ENCODE measurements at regions of chr5 and their contacts with region 1.

Region 1: DNA sequence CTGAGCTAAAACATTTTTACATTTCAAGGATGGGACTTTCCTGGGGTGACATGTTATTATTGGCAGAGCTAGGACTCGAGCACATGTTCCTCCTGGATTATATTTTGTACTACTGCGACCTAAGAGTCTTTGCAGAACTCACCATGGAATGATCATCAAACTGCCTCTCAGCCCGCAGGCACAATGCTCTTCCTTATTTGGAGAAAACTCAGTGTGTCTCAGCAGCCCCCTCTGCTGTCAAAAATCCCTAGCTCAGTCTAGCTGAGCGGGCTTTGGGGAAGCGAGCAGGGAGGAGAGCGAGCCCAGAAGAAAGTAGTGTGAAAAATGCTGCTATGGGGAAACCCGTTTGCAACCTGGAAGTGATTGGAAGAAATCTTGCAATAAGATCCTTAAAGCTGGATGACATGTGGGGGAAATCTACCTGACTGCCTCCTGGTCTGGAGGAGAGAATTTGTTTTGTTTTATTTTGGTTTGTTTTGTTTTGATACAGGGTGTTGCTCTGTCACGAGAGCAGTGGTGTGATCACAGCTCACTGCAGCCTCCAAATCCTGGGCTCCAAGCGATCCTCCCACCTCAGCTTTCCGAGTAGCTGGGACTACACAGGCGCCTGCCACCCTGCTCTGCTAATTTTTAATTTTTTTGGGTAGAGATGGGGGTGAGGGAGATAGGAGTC is 89.9 kb upstream of the CLINT1 start:
- DNase-seq: peak; percentile 89
- H3K4me3 ChIP-seq: no peak overlapping the region
- H3K27ac ChIP-seq: no peak overlapping the region
- H3K4me1 ChIP-seq: no peaks in the 10 kb centered on the region
- H3K27me3 ChIP-seq: no peaks in the 10 kb centered on the region
- CTCF ChIP-seq: peak; percentile 82 to 93

Region 2: DNA sequence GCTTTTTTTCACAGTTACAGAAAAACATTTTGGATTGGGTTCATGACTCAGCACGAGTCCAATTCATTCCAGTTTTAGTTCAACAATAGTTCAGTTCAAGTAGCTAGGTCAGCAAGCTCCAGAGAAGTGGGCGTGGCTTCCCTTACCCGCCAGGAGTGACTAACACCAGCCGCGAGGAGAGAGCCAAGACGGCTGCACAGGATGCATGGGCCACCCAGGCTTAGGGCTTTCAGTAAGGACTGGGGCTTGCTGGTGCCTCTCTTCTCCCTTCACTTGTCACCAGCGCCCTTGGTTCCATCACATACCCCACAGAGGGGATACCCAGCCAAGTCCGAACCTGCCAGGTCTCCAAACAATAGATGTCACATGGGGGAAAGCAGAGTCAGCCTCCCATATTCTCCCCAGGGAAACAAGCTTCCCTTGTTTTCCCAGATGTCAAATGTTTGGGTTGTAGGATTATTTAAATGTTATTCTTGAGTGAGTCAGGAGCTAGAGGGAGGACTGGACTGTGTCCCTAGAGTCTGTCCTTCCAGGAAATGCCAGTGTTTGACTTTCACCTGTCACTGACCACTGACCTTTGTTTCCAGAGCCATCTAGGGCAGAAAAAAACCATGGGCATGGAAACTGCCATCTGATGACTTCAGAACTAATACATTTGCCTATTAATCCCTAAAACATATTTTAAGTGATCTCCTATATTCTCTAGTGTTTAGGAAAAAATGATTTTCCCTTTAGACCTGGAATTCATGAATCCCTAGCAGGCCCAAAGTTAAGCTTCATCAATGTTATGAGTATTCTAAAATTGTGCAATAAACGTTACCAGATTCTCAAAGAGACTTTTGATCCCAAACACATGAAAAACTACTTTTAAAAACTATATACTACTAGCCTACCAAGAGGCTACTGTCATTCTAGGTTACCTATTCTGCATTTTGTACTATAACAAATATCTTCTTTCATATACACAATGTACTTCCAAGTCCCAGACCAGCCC is 436.9 kb before region 1 on chr5:
- CTCF ChIA-PET with region 1: no interaction called
- dilution Hi-C with region 1: no loop called
- in situ Hi-C with region 1: no loop called
- intact Hi-C with region 1: no loop called
- DNase-seq: peak; percentile 95
- H3K4me3 ChIP-seq: no peak overlapping the region
- H3K27ac ChIP-seq: peak overlapping the region; percentile 28
- H3K4me1 ChIP-seq: peaks cover 34% of the 10 kb centered on the region
- H3K27me3 ChIP-seq: no peaks in the 10 kb centered on the region
- CTCF ChIP-seq: no peak

Region 3: DNA sequence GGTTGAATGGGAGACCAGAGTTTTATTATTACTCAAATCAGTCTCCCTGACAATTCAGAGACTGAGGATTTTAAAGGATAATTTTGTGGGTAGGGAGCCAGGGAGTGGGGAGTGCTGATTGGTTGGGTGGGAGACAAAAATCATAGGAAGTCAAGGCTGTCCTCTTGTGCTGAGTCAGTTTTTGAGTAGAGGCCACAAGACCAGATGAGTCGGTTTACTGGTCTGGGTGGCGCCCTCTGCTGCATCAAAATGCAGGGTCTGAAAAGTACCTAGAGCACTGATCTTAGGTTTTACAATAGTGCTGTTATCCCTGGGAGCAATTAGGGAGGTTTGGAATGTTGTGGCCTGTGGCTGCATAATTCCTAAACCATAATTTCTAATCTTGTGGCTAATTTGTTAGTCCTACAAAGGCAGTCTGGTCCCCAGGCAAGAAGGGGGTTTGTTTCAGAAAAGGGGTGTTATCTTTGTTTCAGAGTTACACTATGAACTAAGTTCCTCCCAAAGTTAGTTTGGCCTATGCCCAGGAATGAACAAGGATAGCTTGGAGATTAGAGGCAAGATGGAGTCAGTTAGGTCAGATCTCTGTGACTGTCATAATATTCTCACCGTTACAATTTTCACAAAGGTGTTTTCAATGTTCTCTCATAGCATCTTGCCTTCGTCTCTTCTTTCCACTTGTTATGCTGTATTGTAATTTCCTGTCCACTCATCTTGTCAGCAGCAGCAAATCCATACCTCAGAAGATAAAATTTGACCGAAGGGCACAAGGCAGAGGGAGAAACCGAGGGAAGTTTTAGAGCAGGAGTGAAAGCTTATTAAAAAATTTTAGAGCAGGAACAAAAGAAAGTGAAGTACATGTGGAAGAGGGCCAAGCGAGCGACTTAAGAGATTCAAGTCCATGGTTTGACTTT is 30.7 kb before region 1 on chr5:
- CTCF ChIA-PET with region 1: interaction called, 3 read pairs
- dilution Hi-C with region 1: no loop called
- in situ Hi-C with region 1: no loop called
- intact Hi-C with region 1: loop called (anchors 2 kb)
- DNase-seq: peak; percentile 73
- H3K4me3 ChIP-seq: no peak overlapping the region
- H3K27ac ChIP-seq: no peak overlapping the region
- H3K4me1 ChIP-seq: no peaks in the 10 kb centered on the region
- H3K27me3 ChIP-seq: no peaks in the 10 kb centered on the region
- CTCF ChIP-seq: peak; percentile 57 to 77

Region 4: GRCh38 chr5:157994906-157995519 is 46.1 kb after region 1 on chr5:
- CTCF ChIA-PET with region 1: interaction called, 3 read pairs
- dilution Hi-C with region 1: no loop called
- in situ Hi-C with region 1: no loop called
- intact Hi-C with region 1: loop called (anchors 2 kb)
- DNase-seq: peak; percentile 67
- H3K4me3 ChIP-seq: no peak overlapping the region
- H3K27ac ChIP-seq: no peak overlapping the region
- H3K4me1 ChIP-seq: no peaks in the 10 kb centered on the region
- H3K27me3 ChIP-seq: no peaks in the 10 kb centered on the region
- CTCF ChIP-seq: peak; percentile 69 to 90

Region 5: DNA sequence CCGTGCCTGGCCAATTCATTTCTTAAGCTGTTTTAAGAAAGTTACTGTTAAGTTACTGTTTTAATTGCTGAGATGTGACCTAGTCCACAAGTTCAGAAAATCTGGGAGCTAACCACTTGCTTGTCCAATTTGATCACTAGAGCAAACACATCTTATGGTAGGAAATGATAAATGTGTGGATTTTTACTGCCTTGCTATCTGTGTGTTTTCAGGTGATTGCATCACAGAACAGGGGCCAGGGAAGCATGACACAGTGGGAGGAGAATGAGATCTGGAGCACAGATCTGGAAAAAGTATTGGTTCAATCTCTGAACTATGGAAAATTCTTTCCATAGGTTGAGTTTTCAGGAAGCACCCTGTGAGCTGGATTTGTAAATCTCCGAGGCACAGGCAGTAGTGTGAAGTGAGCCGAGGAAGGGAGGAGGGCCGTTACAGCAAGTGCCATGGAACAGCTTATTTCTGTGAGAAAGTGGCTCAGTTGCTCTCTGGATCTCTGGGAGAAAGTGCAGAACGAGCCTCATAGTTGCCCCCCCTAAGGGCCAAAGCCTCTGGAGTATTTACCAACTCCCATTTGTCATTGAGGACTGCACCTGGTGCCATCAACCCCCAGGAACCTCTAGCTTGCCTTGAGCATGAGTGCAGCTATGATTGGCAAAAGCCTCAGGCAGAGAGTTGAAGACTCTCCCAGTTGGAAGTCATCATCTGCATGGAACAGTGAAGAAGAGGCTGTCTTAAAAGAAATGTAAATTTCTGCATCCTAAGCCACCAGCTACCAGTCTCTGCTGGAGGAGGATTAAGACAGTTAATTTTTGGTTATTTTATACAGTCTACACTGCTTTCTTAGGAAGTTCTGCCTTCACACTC is 71.9 kb after region 1 on chr5:
- CTCF ChIA-PET with region 1: no interaction called
- dilution Hi-C with region 1: no loop called
- in situ Hi-C with region 1: no loop called
- intact Hi-C with region 1: no loop called
- DNase-seq: no peak
- H3K4me3 ChIP-seq: no peak overlapping the region
- H3K27ac ChIP-seq: no peak overlapping the region
- H3K4me1 ChIP-seq: no peaks in the 10 kb centered on the region
- H3K27me3 ChIP-seq: no peaks in the 10 kb centered on the region
- CTCF ChIP-seq: no peak

Region 6: GRCh38 chr5:158485604-158486081 is 536.8 kb after region 1 on chr5:
- CTCF ChIA-PET with region 1: no interaction called
- dilution Hi-C with region 1: no loop called
- in situ Hi-C with region 1: no loop called
- intact Hi-C with region 1: no loop called
- DNase-seq: no peak
- H3K4me3 ChIP-seq: no peak overlapping the region
- H3K27ac ChIP-seq: no peak overlapping the region
- H3K4me1 ChIP-seq: no peaks in the 10 kb centered on the region
- H3K27me3 ChIP-seq: peaks cover 6% of the 10 kb centered on the region
- CTCF ChIP-seq: no peak

Measured in mammary epithelial cell (primary cell).